ENCODE measurements at regions of chr16 and their contacts with region 1.

Region 1: GRCh38 chr16:2874912-2875362 is 8.1 kb upstream of the FLYWCH2 start:
- DNase-seq: peak; percentile 78
- ATAC-seq: peak; percentile 100
- H3K4me3 Mint-ChIP-seq: no peak overlapping the region
- H3K27ac Mint-ChIP-seq: no peak overlapping the region
- H3K4me1 Mint-ChIP-seq: no peaks in the 10 kb centered on the region
- H3K27me3 Mint-ChIP-seq: peaks cover 3% of the 10 kb centered on the region
- CTCF ChIP-seq: peak; percentile 97

Region 2: GRCh38 chr16:2854700-2855309 is 20.1 kb before region 1 on chr16:
- CTCF ChIA-PET with region 1: interaction called, 11 read pairs
- POLR2A ChIA-PET with region 1: no interaction called
- intact Hi-C with region 1: no loop called
- DNase-seq: peak; percentile 29
- ATAC-seq: no peak
- H3K4me3 Mint-ChIP-seq: no peak overlapping the region
- H3K27ac Mint-ChIP-seq: no peak overlapping the region
- H3K4me1 Mint-ChIP-seq: peaks cover 4% of the 10 kb centered on the region
- H3K27me3 Mint-ChIP-seq: peaks cover 6% of the 10 kb centered on the region
- CTCF ChIP-seq: peak; percentile 86

Region 3: GRCh38 chr16:2911580-2912329 is 36.8 kb after region 1 on chr16 and contains the start of gene FLYWCH1:
- CTCF ChIA-PET with region 1: interaction called, 9 read pairs
- POLR2A ChIA-PET with region 1: no interaction called
- intact Hi-C with region 1: loop called (anchors 5 kb)
- DNase-seq: peak; percentile 99
- ATAC-seq: peak; percentile 99
- H3K4me3 Mint-ChIP-seq: peak within 1 kb of the TSS; percentile 85
- H3K27ac Mint-ChIP-seq: peak within 1 kb of the TSS; percentile 81
- H3K4me1 Mint-ChIP-seq: peaks cover 27% of the 10 kb centered on the region
- H3K27me3 Mint-ChIP-seq: no peaks in the 10 kb centered on the region
- CTCF ChIP-seq: no peak
- total RNA-seq, gene FLYWCH1: 33.4 to 34.9 TPM

Region 4: DNA sequence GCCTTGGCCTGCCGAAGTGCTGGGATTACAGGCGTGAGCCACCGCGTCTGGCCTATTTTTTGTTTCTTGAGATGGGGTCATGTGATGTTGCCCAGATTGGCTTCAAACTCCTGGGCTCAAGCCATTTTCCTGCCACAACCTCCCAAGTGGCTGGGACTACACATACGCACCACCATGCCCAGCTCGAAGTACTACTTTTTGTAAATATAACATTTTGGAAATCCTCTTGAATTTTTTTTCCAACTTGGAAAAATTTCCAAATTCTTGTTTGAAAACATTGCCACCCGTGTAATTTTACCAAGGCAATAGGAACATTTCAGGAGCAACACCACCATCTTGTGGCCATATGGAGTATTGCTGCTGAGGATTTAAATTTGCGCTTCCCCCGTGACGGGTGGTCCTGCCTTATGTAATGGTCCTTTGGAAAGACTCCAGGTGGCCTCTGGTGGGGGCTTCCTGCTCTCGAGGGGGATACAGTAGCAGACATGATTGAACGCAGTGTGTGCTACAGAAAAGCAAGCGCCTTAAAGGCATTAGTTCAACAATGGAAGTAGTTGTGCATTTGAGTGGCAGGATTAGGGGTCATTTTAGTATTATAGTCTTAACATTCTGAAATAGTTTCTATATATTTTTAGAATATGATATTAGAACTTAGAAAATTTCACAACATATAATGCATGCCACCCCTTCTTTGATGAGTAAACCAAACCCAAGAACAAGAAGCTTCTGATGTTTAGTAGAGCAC is 44.7 kb after region 1 on chr16:
- CTCF ChIA-PET with region 1: interaction called, 61 read pairs
- POLR2A ChIA-PET with region 1: no interaction called
- intact Hi-C with region 1: loop called (anchors 5 kb)
- DNase-seq: peak; percentile 80
- ATAC-seq: peak; percentile 88
- H3K4me3 Mint-ChIP-seq: no peak overlapping the region
- H3K27ac Mint-ChIP-seq: no peak overlapping the region
- H3K4me1 Mint-ChIP-seq: peaks cover 9% of the 10 kb centered on the region
- H3K27me3 Mint-ChIP-seq: no peaks in the 10 kb centered on the region
- CTCF ChIP-seq: peak; percentile 97

Measured in activated CD8-positive, alpha-beta T cell treated with anti-CD3 and anti-CD28 coated beads for 36 hours (primary cell).